ENCODE measurements at regions of chr5 and their contacts with region 1.

Region 1: GRCh38 chr5:127757576-127757975 is 54.4 kb downstream of the CCDC192 start:
- DNase-seq: no peak
- H3K4me3 Mint-ChIP-seq: no peak overlapping the region
- H3K27ac Mint-ChIP-seq: no peak overlapping the region
- H3K4me1 Mint-ChIP-seq: no peaks in the 10 kb centered on the region
- H3K27me3 Mint-ChIP-seq: peaks cover 12% of the 10 kb centered on the region

Region 2: GRCh38 chr5:127718181-127718580 is 39.4 kb before region 1 on chr5:
- intact Hi-C with region 1: no loop called
- DNase-seq: no peak
- H3K4me3 Mint-ChIP-seq: no peak overlapping the region
- H3K27ac Mint-ChIP-seq: no peak overlapping the region
- H3K4me1 Mint-ChIP-seq: no peaks in the 10 kb centered on the region
- H3K27me3 Mint-ChIP-seq: peaks cover 8% of the 10 kb centered on the region

Region 3: GRCh38 chr5:127875235-127876021 is 117.9 kb after region 1 on chr5:
- intact Hi-C with region 1: loop called (anchors 10 kb)
- DNase-seq: no peak
- H3K4me3 Mint-ChIP-seq: no peak overlapping the region
- H3K27ac Mint-ChIP-seq: no peak overlapping the region
- H3K4me1 Mint-ChIP-seq: no peaks in the 10 kb centered on the region
- H3K27me3 Mint-ChIP-seq: peaks cover 8% of the 10 kb centered on the region